ENCODE measurements at regions of chr1 and their contacts with region 1.

Region 1: GRCh38 chr1:27473755-27474154 is 16.2 kb downstream of the WASF2 start:
- DNase-seq: no peak
- ATAC-seq: no peak
- H3K4me3 ChIP-seq: no peak overlapping the region
- H3K27ac ChIP-seq: no peak overlapping the region
- H3K4me1 ChIP-seq: peaks cover 57% of the 10 kb centered on the region
- H3K27me3 ChIP-seq: no peaks in the 10 kb centered on the region
- CTCF ChIP-seq: no peak

Region 2: DNA sequence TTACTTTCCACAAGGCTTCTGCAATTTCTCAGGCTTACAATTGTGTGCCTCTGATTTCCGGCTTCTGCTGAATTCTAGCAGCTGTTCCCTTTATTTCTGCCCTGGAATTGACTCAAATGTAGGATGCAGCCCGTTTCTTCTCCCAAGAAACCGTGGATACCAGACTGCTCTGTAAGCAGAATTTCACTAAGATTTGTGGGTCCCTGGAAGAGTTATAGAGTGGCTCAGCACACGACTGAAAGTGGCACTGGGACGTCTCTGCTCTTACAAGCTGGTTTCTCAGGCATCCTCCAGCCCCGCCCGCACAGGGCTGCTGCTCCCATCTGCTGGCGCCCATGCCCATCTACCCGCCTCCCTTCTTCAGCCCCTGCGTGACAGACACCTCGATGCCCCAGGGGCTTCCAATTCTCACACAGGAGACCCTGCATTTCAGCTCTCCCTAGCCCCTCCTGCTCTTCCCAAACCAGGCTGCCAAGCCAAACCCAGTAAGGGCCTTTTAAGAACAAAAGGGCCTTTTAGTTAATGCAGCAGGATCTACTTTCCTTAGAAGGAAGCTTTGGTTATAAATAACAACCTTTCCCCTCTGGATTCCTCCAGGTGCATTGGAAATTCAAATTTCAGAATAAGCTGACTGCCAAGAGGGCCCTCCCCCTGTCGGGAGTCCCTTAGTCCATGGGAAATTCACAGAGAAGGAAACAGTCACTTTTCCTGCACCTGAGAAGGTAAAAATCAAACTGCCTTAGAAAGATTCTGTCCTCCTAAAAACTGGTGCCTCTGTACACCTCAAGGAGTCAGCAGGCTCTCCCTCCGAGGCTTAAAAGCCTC is 415.7 kb before region 1 on chr1:
- intact Hi-C with region 1: no loop called
- DNase-seq: no peak
- ATAC-seq: no peak
- H3K4me3 ChIP-seq: no peak overlapping the region
- H3K27ac ChIP-seq: no peak overlapping the region
- H3K4me1 ChIP-seq: no peaks in the 10 kb centered on the region
- H3K27me3 ChIP-seq: no peaks in the 10 kb centered on the region
- CTCF ChIP-seq: no peak

Region 3: GRCh38 chr1:27341525-27342252 is 132.1 kb before region 1 on chr1 and contains the start of gene SYTL1:
- intact Hi-C with region 1: no loop called
- DNase-seq: peak; percentile 86
- ATAC-seq: peak; percentile 82
- H3K4me3 ChIP-seq: peak within 1 kb of the TSS; percentile 62
- H3K27ac ChIP-seq: peak within 1 kb of the TSS; percentile 82
- H3K4me1 ChIP-seq: peaks cover 8% of the 10 kb centered on the region
- H3K27me3 ChIP-seq: no peaks in the 10 kb centered on the region
- CTCF ChIP-seq: no peak
- total RNA-seq, gene SYTL1: 30.6 TPM

Region 4: GRCh38 chr1:27413004-27413403 is 60.8 kb before region 1 on chr1:
- intact Hi-C with region 1: no loop called
- DNase-seq: no peak
- ATAC-seq: peak; percentile 62
- H3K4me3 ChIP-seq: no peak overlapping the region
- H3K27ac ChIP-seq: peak overlapping the region; percentile 25
- H3K4me1 ChIP-seq: peaks cover 17% of the 10 kb centered on the region
- H3K27me3 ChIP-seq: no peaks in the 10 kb centered on the region
- CTCF ChIP-seq: no peak

Region 5: GRCh38 chr1:27428316-27429028 is 45.3 kb before region 1 on chr1:
- intact Hi-C with region 1: loop called (anchors 10 kb)
- DNase-seq: no peak
- ATAC-seq: peak; percentile 33
- H3K4me3 ChIP-seq: no peak overlapping the region
- H3K27ac ChIP-seq: peak overlapping the region; percentile 86
- H3K4me1 ChIP-seq: peaks cover 63% of the 10 kb centered on the region
- H3K27me3 ChIP-seq: no peaks in the 10 kb centered on the region
- CTCF ChIP-seq: no peak

Region 6: DNA sequence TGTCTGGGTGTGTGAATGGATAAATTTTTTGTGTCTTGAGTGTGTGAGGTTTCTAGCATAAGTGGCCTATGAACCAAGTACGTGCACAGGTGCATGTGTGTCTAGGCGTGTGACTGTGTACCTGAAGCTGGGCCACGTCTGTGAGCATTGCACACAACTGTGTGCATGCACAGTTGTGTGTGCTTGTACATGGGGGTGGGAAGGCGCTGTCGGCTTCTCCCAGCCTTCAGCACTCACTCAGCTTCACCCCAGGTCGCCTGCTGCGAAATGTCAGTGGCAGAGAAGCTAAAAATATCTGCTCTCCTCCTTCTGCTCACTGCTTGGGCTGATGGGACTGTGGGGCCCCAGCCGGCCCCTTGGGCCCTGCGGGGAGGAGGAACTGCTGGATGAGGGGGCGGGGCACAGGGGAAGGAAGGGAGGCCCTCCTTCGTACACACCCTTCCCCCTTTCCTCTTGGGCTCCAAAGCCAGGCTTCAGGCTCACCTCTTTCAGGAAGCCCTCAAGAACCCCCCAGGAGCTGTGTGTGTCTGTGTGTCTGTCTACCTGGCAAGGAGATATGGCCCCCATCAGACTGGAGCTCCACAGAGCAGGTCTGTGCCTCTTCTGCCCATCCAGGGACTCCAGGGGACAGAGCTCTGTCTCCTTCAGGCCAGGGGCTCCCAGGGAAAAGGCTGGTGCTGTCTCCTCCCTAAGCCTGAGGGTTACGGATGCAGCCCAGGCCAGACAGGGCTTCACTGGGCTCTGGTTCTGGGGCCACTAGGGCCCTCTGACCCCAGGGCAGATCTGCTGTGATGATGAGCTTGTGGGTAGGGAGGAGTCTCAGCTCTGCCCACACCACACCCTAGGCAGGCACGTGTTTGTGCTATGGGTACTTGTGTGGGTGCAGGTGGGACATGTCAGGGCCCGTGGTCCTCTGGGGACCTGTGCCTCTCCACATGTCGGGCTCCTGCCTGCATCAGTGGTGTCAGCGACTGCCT is 51.8 kb after region 1 on chr1:
- intact Hi-C with region 1: no loop called
- DNase-seq: peak; percentile 86
- ATAC-seq: peak; percentile 72
- H3K4me3 ChIP-seq: peak overlapping the region; percentile 56
- H3K27ac ChIP-seq: peak overlapping the region; percentile 82
- H3K4me1 ChIP-seq: peaks cover 79% of the 10 kb centered on the region
- H3K27me3 ChIP-seq: no peaks in the 10 kb centered on the region
- CTCF ChIP-seq: no peak

Measured in upper lobe of right lung (tissue), 1 donor.